H1 (cell line): ENCODE measurements at regions of chr19 and their contacts with region 1.

Region 1: DNA sequence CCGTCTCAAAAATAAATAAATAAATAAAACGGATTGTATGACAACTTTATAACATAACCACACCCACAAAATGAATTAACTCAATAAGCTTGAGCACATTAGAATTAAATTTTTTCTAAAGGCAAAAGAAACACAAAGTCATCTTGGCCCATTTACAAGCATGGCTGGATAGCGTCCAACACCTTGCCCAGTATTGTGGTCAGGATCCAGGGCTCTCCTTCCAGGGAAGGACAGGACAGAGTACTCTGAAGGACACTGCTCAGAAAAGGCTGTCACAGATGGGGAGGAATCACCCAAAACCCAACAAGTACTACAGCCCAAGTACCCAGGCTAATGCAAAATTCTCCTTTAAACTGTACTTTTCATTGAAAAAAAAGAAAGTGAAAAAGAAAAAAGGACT is 27.1 kb downstream of the SUGP2 start:
- DNase-seq: no peak
- H3K4me3 ChIP-seq: no peak overlapping the region
- H3K27ac ChIP-seq: no peak overlapping the region
- H3K4me1 ChIP-seq: no peaks in the 10 kb centered on the region
- H3K27me3 ChIP-seq: no peaks in the 10 kb centered on the region
- CTCF ChIP-seq: no peak
- EP300 ChIP-seq: no peak
- POLR2A ChIP-seq: no peak
- RAD21 ChIP-seq: no peak

Region 2: DNA sequence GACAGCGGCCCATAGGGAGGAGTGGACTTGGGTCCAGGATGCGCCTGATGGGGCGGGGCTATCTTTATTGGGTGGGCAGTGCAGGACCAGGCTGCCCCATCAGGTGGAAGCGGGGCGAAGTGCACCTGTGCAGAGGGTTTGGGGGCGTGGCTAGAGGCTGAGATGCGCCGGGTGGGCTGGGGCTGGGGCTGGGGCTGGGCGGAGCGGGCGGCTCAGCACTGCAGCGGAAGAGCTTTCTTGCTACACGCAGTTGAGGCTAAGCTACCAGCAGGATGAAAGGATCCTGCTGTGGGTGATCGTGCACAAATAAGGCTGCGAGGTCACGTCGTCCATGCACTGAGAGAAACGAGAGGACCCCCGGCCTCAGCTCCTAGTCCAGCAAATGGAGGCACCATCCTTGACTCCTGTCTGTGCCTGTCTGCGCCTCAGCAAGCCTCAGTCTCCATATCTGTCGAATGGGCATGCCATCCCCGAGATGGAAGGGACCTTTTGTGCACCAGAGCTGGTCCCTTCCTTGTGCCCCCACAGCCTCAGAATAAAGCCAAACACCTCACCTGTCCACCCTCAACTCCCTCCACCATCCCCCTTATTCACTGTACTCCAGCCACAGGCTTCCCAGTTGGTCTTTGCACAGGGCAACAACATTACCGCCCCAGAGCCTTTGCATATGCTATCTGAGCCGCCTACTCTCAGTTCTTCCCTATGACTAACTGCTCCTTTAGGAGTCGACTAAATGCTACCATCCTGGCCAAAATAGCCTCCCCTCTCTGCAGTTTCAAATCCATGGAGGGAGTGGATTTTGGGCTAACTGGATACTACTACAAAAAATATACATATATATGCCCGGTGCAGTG is 44.2 kb before region 1 on chr19:
- CTCF ChIA-PET with region 1: no interaction called
- POLR2A ChIA-PET with region 1: no interaction called
- DNase-seq: peak; percentile 78 to 92
- H3K4me3 ChIP-seq: peak overlapping the region in 1 of 4 experiments; percentile 15; a peak in 3 of 8 replicates
- H3K27ac ChIP-seq: no peak overlapping the region
- H3K4me1 ChIP-seq: peaks cover 0 to 5% (median 2%) of the 10 kb centered on the region in 4 experiments; a peak in 3 of 7 replicates
- H3K27me3 ChIP-seq: no peaks in the 10 kb centered on the region
- CTCF ChIP-seq: peak; percentile 32 to 51 (median 47)
- EP300 ChIP-seq: no peak
- POLR2A ChIP-seq: peak in 1 of 2 experiments; percentile 43; a peak in 1 of 3 replicates
- RAD21 ChIP-seq: peak; percentile 33 to 45; a peak in 3 of 4 replicates

Region 3: DNA sequence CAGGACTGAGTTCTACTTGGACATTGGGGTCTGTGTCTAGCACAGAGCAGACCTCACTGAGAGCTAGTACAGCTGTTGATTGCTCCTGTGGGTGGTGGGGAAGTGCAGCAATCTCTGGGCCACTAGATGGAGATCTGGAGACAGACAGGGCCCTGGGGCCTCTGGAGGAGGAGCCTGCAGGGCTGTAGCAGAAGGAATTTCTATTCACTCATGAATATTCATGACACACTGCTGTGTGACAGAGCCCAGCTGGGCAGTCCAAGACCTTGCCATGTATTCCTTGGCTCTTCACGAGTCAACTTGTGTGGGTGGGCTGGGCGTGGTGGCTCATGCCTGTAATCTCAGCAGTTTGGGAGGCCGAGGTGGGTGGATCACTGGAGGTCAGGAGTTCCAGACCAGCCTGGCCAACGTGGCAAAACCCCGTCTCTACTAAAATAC is 10.4 kb before region 1 on chr19:
- CTCF ChIA-PET with region 1: interaction called, 5 read pairs
- POLR2A ChIA-PET with region 1: interaction called, 26 read pairs
- DNase-seq: peak; percentile 47 to 59
- H3K4me3 ChIP-seq: no peak overlapping the region
- H3K27ac ChIP-seq: no peak overlapping the region
- H3K4me1 ChIP-seq: peaks cover 0 to 7% (median 3%) of the 10 kb centered on the region in 4 experiments; a peak in 5 of 7 replicates
- H3K27me3 ChIP-seq: no peaks in the 10 kb centered on the region
- CTCF ChIP-seq: peak; percentile 60 to 84 (median 73)
- EP300 ChIP-seq: no peak
- POLR2A ChIP-seq: peak in 1 of 2 experiments; percentile 17; a peak in 1 of 3 replicates
- RAD21 ChIP-seq: peak; percentile 44 to 58